ENCODE measurements at regions of chr14 and their contacts with region 1.

Region 1: GRCh38 chr14:32252030-32252670 is 49.1 kb upstream of the RNU6-8 start:
- DNase-seq: peak; percentile 35
- H3K4me3 Mint-ChIP-seq: no peak overlapping the region
- H3K27ac Mint-ChIP-seq: no peak overlapping the region
- H3K4me1 Mint-ChIP-seq: no peaks in the 10 kb centered on the region
- H3K27me3 Mint-ChIP-seq: no peaks in the 10 kb centered on the region

Region 2: GRCh38 chr14:31371646-31372045 is 880.5 kb before region 1 on chr14:
- intact Hi-C with region 1: no loop called
- DNase-seq: no peak
- H3K4me3 Mint-ChIP-seq: peak overlapping the region; percentile 30
- H3K27ac Mint-ChIP-seq: peak overlapping the region; percentile 52
- H3K4me1 Mint-ChIP-seq: peaks cover 22% of the 10 kb centered on the region
- H3K27me3 Mint-ChIP-seq: no peaks in the 10 kb centered on the region

Region 3: GRCh38 chr14:31510222-31510621 is 741.9 kb before region 1 on chr14:
- intact Hi-C with region 1: loop called (anchors 1 kb)
- DNase-seq: no peak
- H3K4me3 Mint-ChIP-seq: no peak overlapping the region
- H3K27ac Mint-ChIP-seq: no peak overlapping the region
- H3K4me1 Mint-ChIP-seq: no peaks in the 10 kb centered on the region
- H3K27me3 Mint-ChIP-seq: peaks cover 4% of the 10 kb centered on the region

Region 4: GRCh38 chr14:31926123-31926522 is 326.0 kb before region 1 on chr14:
- intact Hi-C with region 1: loop called (anchors 1 kb)
- DNase-seq: no peak
- H3K4me3 Mint-ChIP-seq: no peak overlapping the region
- H3K27ac Mint-ChIP-seq: no peak overlapping the region
- H3K4me1 Mint-ChIP-seq: peaks cover 10% of the 10 kb centered on the region
- H3K27me3 Mint-ChIP-seq: peaks cover 2% of the 10 kb centered on the region

Region 5: DNA sequence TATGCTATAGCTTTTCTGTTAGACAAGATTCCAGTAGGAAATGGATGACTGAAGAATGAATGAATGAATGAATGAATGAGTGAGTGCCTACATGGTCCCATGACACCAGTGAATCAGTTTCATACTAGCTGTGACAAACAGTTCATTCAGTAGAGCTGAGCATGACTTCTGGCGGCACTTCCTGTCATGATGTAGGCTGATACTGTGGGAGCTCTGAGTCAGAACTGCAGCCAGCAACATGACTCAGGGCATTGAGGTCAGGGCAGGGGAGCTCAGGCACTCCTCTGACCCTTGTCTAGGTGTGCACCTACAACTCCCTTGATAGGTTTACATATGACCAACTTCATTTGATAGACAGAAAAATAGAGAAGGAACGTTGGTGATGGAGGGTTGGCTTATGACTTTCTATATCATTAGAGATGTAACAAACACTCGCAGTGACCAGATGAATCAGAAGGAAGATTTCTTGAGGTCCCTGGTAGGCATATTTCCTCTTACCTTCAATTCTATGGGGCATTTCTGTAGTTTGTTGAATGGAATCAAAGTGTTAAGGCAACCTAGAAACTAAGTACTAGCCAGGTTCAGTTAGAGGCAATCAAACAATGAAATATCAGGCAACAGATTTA is 314.3 kb before region 1 on chr14:
- intact Hi-C with region 1: loop called (anchors 2 kb)
- DNase-seq: peak; percentile 64
- H3K4me3 Mint-ChIP-seq: no peak overlapping the region
- H3K27ac Mint-ChIP-seq: peak overlapping the region; percentile 7
- H3K4me1 Mint-ChIP-seq: peaks cover 10% of the 10 kb centered on the region
- H3K27me3 Mint-ChIP-seq: peaks cover 3% of the 10 kb centered on the region

Region 6: DNA sequence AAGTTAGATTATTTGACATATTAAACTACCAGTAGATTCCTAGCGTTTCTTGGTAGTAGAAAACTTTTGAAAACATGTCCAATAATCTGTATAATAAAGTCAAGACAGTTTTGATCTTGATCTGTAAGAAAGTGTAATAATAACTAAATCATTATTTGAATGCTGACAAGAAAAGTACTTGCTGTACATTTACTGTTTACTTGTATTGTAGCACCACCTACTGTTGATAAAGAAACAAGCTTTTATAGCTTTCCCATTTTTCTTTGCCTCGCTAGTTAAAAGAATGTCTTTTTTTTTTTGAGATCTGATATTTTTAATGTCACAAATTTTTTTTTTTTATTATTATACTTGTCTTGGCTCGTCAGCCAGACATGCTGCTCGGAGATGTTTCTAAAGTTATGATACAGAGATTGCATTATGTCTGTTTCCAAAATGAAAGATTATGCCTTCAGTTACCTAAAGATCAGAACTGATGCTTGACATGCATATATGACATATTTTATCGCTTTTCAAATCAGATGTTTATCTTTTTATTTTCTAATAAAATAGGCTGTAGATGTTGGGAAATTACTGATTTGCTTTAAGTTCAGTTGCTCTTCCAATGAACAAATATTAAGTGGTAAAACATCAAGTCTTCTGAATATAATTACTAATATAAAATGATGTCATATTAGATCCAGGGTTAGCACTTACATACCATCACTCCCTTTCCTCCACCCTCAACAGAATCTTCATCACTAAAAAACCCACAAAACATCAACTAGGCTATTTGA is 217.4 kb after region 1 on chr14:
- intact Hi-C with region 1: loop called (anchors 2 kb)
- DNase-seq: no peak
- H3K4me3 Mint-ChIP-seq: no peak overlapping the region
- H3K27ac Mint-ChIP-seq: no peak overlapping the region
- H3K4me1 Mint-ChIP-seq: no peaks in the 10 kb centered on the region
- H3K27me3 Mint-ChIP-seq: peaks cover 6% of the 10 kb centered on the region

Region 7: DNA sequence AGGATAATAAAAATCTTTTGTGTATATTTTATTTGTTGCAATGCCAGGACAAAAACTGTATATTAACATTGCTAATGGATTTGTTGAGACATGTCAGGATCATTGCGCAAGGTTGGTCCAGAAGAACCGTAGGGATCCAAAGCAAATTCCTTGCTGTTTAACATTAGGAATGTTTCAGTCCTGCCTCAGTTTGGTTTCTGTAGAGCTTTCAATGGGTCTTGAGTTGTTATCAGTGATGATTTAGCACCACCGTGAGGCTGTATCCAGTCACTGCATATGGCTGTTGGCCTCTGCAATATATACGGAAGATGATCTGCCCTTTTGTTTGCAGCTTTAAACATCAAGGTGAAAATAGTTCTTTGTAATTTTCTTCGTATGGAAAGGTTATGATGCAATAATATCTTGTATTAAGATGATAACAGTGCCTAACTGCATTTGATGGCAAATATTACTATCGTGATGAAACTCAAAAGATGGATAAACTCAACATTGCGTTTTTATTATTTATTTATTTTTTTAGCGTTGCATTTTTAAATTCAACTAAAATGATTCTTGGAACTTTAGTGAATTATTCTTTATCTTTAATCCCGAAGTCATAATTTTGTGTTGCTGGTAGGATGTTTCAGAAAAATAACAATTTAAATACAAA is 308.2 kb after region 1 on chr14:
- intact Hi-C with region 1: loop called (anchors 1 kb)
- DNase-seq: peak; percentile 5
- H3K4me3 Mint-ChIP-seq: no peak overlapping the region
- H3K27ac Mint-ChIP-seq: no peak overlapping the region
- H3K4me1 Mint-ChIP-seq: peaks cover 17% of the 10 kb centered on the region
- H3K27me3 Mint-ChIP-seq: no peaks in the 10 kb centered on the region

Measured in activated T-helper 1 cell treated with anti-CD3 and anti-CD28 coated beads, Interleukin-12 subunit alpha, Interleukin-12 subunit beta, Interleukin-2, Interleukin-4 antibody, amounts not matched to agents 30 ng/mL and 10 ng/mL and 1 ng/mL, durations not matched to agents 14 hours and 24 hours and 36 hours (primary cell).